ENCODE measurements at regions of chr4 and their contacts with region 1.

Region 1: DNA sequence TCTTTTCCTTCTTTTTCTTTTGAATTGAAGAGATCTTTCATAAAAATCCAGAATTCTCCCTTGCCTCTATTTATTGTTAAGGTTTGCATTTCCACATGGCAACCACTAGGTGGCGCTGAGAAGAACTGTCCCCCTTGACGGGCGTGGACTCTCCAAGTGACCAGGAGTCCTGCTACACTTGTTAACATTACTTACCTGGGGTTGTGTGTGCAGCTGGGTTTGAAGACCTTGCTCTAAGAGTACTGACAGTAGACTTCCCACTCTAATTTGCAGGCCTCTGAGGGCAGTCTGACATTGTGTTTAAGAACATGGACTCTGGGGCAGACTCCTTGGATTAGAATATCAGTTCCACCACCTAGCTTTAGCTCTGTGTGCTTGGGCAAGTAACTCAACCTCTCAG is 52.8 kb downstream of the GPRIN3 start:
- H3K4me3 Mint-ChIP-seq: no peak overlapping the region
- H3K27ac Mint-ChIP-seq: no peak overlapping the region
- H3K4me1 Mint-ChIP-seq: peaks cover 7% of the 10 kb centered on the region
- H3K27me3 Mint-ChIP-seq: no peaks in the 10 kb centered on the region

Region 2: GRCh38 chr4:88697588-88698329 is 557.1 kb before region 1 on chr4 and contains the start of gene NAP1L5:
- intact Hi-C with region 1: no loop called
- H3K4me3 Mint-ChIP-seq: peak within 1 kb of the TSS; percentile 82
- H3K27ac Mint-ChIP-seq: peak within 1 kb of the TSS; percentile 70
- H3K4me1 Mint-ChIP-seq: peaks cover 14% of the 10 kb centered on the region
- H3K27me3 Mint-ChIP-seq: no peaks in the 10 kb centered on the region

Region 3: DNA sequence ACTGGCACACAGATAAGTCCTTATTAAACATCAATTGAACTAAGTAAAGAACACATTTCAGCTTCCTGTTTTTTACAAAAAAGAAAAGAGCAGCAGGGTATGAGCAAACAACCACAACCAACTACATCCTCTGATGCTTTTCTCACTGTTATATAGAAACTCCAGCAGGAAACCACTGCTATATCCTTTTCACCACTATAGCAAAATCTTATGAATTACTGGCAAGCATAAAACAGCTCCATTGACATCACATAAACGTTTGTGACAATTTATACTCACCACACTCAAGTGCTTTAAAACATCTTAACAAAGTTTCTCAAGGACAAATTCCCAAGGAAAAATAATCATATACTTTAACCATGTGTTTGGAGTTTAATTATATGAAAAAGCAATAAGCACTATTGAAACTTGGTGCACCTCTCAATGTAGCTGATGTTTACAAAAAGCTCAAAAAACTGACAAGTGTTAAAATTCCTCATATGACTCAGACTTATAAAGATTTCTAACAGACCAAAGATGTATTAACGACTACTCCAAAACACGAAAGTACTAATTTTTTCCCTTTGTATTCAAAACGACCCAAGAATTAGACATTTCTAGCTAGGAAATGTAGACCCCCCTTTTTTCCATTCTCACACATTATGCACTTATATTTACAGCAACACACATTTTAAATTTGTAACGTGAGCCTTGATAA is 39.9 kb after region 1 on chr4:
- intact Hi-C with region 1: loop called (anchors 5 kb)
- H3K4me3 Mint-ChIP-seq: no peak overlapping the region
- H3K27ac Mint-ChIP-seq: peak overlapping the region; percentile 37
- H3K4me1 Mint-ChIP-seq: peaks cover 48% of the 10 kb centered on the region
- H3K27me3 Mint-ChIP-seq: no peaks in the 10 kb centered on the region

Region 4: DNA sequence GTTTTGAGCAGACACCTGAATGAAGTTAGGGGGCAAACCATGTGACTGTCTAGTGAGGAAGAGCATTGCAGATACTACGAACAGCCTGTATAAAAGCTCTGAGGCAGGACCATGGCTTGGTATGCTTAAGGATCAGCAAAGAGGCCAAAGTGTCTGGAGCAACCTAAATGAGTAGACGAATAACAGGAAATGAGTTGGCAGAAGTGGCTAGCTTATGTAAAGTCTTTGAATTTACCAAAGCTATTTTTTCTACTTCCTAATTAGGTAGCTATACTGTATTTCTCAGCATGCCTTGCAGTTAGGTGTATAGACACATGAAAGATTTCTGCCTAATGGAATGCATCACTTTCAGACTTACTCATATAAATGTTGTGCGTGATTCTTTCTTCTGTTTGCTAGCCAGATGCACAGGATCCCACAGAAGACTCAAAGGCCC is 62.1 kb after region 1 on chr4:
- intact Hi-C with region 1: loop called (anchors 5 kb)
- H3K4me3 Mint-ChIP-seq: no peak overlapping the region
- H3K27ac Mint-ChIP-seq: peak overlapping the region; percentile 82
- H3K4me1 Mint-ChIP-seq: peaks cover 36% of the 10 kb centered on the region
- H3K27me3 Mint-ChIP-seq: no peaks in the 10 kb centered on the region

Region 5: GRCh38 chr4:89404531-89404930 is 149.7 kb after region 1 on chr4:
- intact Hi-C with region 1: no loop called
- H3K4me3 Mint-ChIP-seq: no peak overlapping the region
- H3K27ac Mint-ChIP-seq: no peak overlapping the region
- H3K4me1 Mint-ChIP-seq: peaks cover 10% of the 10 kb centered on the region
- H3K27me3 Mint-ChIP-seq: no peaks in the 10 kb centered on the region

Measured in dendritic cell treated with granulocyte-macrophage colony-stimulating factor and Interleukin-4, amounts not matched to agents 40 ng/mL and 50 ng/mL, for 4 days (primary cell).